Activated CD4-positive, alpha-beta memory T cell treated with anti-CD3 and anti-CD28 coated beads for 36 hours (primary cell): ENCODE measurements at regions of chr3 and their contacts with region 1.

Region 1: DNA sequence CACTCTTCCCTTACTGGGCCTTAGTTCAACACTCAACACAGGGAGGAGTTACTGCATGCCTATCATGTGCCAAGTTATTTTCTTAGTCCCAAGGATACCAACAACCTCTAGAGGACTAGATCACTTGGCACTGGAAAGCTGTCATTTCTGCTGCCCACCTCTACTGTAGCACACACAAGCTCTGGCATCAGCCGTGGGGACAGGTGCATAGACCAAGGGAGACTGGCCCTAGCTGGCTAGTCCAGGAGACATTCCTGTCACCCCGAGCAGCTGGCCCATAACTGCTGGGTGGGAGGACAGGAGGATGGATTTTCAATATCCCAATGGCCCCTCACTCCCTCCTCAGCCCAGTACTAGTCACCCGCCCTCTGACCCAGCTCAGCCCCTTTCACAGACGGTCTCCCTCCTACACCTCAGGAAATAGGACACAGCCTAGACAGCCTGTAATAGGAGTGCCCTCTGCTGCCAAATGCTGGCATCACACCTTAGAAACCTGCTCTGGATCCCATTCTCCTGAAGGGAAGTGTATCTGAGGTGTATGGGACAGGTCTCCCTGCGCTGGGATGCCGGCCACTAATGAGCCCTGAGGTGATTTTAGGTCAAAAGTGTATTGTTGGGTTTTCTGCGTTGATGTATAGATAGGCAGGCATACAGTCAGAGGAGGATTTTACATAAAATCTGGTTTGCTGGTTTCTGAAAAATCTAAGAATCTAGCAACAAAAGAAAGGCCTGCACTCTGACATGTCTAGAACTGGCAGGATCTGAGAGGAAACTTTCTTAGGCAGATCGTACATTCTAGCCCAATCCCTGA is 3.4 kb upstream of the DZIP1L start:
- DNase-seq: peak; percentile 77
- H3K4me3 Mint-ChIP-seq: no peak overlapping the region
- H3K27ac Mint-ChIP-seq: no peak overlapping the region
- H3K4me1 Mint-ChIP-seq: peaks cover 5% of the 10 kb centered on the region
- H3K27me3 Mint-ChIP-seq: peaks cover 25% of the 10 kb centered on the region

Region 2: GRCh38 chr3:138082085-138082991 is 36.5 kb before region 1 on chr3:
- CTCF ChIA-PET with region 1: interaction called, 17 read pairs
- POLR2A ChIA-PET with region 1: no interaction called
- intact Hi-C with region 1: loop called (anchors 5 kb)
- DNase-seq: peak; percentile 39
- H3K4me3 Mint-ChIP-seq: peak overlapping the region; percentile 3
- H3K27ac Mint-ChIP-seq: peak overlapping the region; percentile 57
- H3K4me1 Mint-ChIP-seq: peaks cover 28% of the 10 kb centered on the region
- H3K27me3 Mint-ChIP-seq: no peaks in the 10 kb centered on the region

Region 3: DNA sequence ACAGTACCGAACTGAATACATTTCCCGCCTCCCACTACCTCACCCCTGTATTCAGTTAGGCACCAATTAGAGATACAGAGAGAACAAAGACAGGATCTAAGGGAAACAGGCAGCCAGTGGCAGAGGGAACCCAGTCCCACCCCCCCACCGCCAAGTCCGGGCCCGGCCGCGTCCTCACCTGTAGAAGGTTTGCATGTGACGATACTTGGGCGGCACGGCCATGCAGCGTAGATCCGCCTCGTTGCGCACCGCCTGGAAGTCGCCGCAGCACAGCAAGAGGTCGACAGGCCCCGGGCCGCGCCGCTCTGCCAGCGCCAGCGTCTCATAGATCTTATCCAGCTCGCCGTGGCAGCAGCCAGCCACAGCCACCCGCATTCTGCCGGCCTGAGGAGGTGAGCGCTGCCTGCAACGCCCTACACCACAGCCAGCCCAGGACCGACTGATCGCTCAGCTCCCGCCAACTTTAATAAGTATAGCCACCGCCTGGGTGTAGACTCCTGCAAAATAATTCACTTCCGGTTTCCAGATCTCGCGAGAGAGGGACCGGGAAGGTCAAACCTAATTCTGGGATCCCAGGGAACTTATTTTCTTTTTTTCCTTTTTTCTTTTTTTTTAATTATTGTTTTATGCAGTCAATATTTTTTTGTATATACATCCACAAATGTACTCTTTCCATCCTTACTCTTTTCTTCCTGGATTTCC is 55.8 kb after region 1 on chr3 and contains the start of gene DBR1:
- CTCF ChIA-PET with region 1: interaction called, 3 read pairs
- POLR2A ChIA-PET with region 1: no interaction called
- intact Hi-C with region 1: loop called (anchors 1 kb)
- DNase-seq: peak; percentile 77
- H3K4me3 Mint-ChIP-seq: peak within 1 kb of the TSS; percentile 96
- H3K27ac Mint-ChIP-seq: peak within 1 kb of the TSS; percentile 97
- H3K4me1 Mint-ChIP-seq: peaks cover 38% of the 10 kb centered on the region
- H3K27me3 Mint-ChIP-seq: no peaks in the 10 kb centered on the region
- total RNA-seq, gene DBR1: 21.7 to 22.6 TPM

Region 4: GRCh38 chr3:138479438-138479863 is 360.6 kb after region 1 on chr3:
- CTCF ChIA-PET with region 1: no interaction called
- POLR2A ChIA-PET with region 1: no interaction called
- intact Hi-C with region 1: no loop called
- DNase-seq: peak; percentile 54
- H3K4me3 Mint-ChIP-seq: no peak overlapping the region
- H3K27ac Mint-ChIP-seq: no peak overlapping the region
- H3K4me1 Mint-ChIP-seq: no peaks in the 10 kb centered on the region
- H3K27me3 Mint-ChIP-seq: peaks cover 5% of the 10 kb centered on the region